Activated T-helper 2 cell treated with anti-CD3 and anti-CD28 coated beads, Interferon-gamma antibody, Interleukin-2, Interleukin-4, amounts not matched to agents 10 μg/mL and 5 μg/mL and 100 μg/mL, durations not matched to agents 14 hours and 24 hours and 36 hours (primary cell): ENCODE measurements at regions of chr11 and their contacts with region 1.

Region 1: DNA sequence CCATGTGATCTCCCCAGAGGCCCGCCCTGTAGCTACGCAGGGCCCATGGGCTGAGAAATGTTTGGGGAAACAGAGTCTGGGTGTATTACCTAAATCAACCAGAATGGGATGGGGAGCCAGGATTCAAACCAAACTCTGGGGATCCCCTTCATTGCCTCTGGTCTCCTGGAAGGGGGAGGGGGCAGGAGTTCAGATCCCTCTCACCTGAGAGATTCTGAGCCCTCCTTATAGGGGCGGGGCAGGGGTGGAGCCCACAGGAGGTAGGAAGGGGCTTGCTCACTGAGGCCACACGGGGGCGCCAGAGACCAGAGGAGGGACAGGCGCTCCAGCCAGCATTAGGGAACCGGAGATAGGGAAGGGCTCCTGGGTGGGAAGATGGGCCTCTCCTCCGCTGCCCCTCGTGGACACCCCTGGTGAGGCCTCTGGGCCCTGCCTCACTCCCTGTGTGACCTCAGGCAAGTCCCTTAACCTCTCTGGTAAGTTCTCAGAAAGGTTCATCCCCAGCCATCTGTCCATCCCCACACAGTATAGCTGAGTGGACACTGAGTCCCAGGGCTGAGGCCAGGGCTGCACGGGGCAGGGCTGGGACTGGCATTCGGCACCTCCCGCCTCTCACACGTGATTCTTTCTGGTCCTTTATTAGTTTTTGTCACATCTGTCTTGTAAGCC is 2.7 kb upstream of the CDC42BPG start:
- DNase-seq: peak; percentile 81
- H3K4me3 Mint-ChIP-seq: no peak overlapping the region
- H3K27ac Mint-ChIP-seq: no peak overlapping the region
- H3K4me1 Mint-ChIP-seq: peaks cover 36% of the 10 kb centered on the region
- H3K27me3 Mint-ChIP-seq: no peaks in the 10 kb centered on the region

Region 2: DNA sequence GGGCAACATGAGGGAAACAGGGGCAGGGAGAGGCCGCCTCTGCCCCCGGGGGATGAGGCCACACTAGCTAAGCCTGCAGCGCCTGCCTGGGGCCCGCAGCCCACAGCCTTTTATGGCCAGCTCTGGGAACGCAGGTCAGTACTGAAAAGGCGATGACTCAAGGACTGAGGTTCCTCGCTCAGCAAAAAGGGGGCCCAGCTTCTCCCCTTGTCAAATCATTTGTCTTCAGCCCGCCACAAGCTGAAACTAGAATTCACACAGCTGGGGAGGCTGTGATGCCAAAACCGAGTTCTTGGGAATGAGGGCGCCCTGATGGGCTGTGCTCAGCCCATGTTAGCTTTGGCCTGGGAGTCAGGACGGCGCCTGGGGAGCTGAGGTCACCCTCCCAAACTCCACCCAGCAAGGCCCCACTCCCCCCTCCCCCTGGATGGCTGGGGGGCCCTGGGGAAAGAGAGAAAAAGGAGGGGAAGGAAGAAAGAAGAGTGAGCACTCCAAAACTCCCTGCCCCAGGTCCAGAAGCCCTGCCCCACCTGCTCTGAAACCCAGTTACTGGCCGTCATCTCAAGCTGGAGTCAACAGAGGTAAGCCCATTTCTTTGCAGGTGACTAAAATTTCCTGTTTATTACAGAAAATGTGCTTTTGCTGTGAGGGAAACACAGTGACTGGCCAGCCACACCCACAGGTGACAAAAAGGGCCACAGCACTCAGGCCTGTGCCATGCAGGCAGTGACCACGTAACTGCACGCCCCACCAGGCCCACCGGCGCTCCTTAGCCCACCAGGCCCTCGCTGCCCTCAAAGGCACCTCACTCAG is 17.5 kb after region 1 on chr11:
- intact Hi-C with region 1: loop called (anchors 1 kb)
- DNase-seq: no peak
- H3K4me3 Mint-ChIP-seq: peak overlapping the region; percentile 70
- H3K27ac Mint-ChIP-seq: peak overlapping the region; percentile 98
- H3K4me1 Mint-ChIP-seq: peaks cover 78% of the 10 kb centered on the region
- H3K27me3 Mint-ChIP-seq: no peaks in the 10 kb centered on the region

Region 3: GRCh38 chr11:64887757-64888405 is 40.7 kb after region 1 on chr11:
- intact Hi-C with region 1: loop called (anchors 1 kb)
- DNase-seq: peak; percentile 83
- H3K4me3 Mint-ChIP-seq: peak overlapping the region; percentile 77
- H3K27ac Mint-ChIP-seq: peak overlapping the region; percentile 89
- H3K4me1 Mint-ChIP-seq: peaks cover 27% of the 10 kb centered on the region
- H3K27me3 Mint-ChIP-seq: no peaks in the 10 kb centered on the region

Region 4: GRCh38 chr11:64894070-64894796 is 47.1 kb after region 1 on chr11:
- intact Hi-C with region 1: loop called (anchors 1 kb)
- DNase-seq: peak; percentile 83
- H3K4me3 Mint-ChIP-seq: no peak overlapping the region
- H3K27ac Mint-ChIP-seq: no peak overlapping the region
- H3K4me1 Mint-ChIP-seq: peaks cover 1% of the 10 kb centered on the region
- H3K27me3 Mint-ChIP-seq: no peaks in the 10 kb centered on the region

Region 5: GRCh38 chr11:65117216-65118096 is 270.3 kb after region 1 on chr11 and contains the start of gene ZNHIT2:
- intact Hi-C with region 1: loop called (anchors 5 kb)
- DNase-seq: peak; percentile 100
- H3K4me3 Mint-ChIP-seq: peak within 1 kb of the TSS; percentile 84
- H3K27ac Mint-ChIP-seq: peak within 1 kb of the TSS; percentile 88
- H3K4me1 Mint-ChIP-seq: peaks cover 28% of the 10 kb centered on the region
- H3K27me3 Mint-ChIP-seq: no peaks in the 10 kb centered on the region
- total RNA-seq, gene ZNHIT2: 11.3 and 12.8 TPM in 2 replicates